GM12878 (cell line): ENCODE measurements at regions of chr20 and their contacts with region 1.

Region 1: DNA sequence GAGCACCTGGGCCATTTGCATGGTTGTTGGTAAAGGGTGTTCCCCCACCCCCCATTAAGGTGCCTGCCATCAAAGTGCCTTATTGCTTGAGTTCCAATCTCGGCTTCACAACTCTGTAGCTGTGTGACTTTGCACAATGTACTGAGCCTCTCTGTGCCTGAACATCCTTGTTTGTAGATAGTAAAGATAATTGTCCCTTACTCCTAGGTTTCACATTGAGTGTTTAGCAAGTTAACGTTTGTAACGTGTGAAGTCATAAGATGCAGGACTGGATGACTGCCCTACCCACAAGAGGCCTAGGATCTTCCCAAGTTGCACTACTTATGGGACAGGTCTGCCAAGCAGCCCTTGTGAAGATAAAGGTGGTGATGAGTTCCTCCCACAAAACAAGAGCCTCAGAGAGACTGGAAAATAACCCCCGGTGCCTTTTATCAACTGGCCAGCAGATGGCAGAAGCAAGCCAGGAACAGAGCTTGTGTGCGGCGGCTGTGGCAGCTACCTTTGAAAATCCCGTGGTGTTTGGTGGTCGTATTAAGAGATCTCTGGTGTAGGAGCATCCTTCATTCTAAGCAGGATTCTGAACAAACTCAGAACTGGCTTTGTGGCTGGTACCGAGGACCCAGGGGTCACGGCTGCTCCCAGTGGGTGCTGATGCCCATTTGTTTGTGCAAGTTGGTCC is 99.0 kb downstream of the CDH26 start:
- DNase-seq: peak; percentile 17
- ATAC-seq: peak; percentile 85
- H3K4me3 ChIP-seq: no peak overlapping the region
- H3K27ac ChIP-seq: no peak overlapping the region
- H3K4me1 ChIP-seq: no peaks in the 10 kb centered on the region
- H3K27me3 ChIP-seq: no peaks in the 10 kb centered on the region
- CTCF ChIP-seq: peak; percentile 82 to 92 (median 82)
- EP300 ChIP-seq: no peak
- POLR2A ChIP-seq: no peak
- RAD21 ChIP-seq: peak; percentile 86

Region 2: GRCh38 chr20:59940174-59940971 is 116.9 kb before region 1 on chr20 and contains the starts of genes FAM217B and PPP1R3D:
- CTCF ChIA-PET with region 1: interaction called, 3 read pairs
- POLR2A ChIA-PET with region 1: no interaction called
- RAD21 ChIA-PET with region 1: interaction called, 3 read pairs
- SMC1A ChIA-PET with region 1: no interaction called
- in situ Hi-C with region 1: no loop called
- intact Hi-C with region 1: loop called (anchors 10 kb)
- DNase-seq: peak; percentile 73
- ATAC-seq: peak; percentile 96
- H3K4me3 ChIP-seq: peak within 1 kb of the TSS; percentile 99
- H3K27ac ChIP-seq: peak within 1 kb of the TSS; percentile 93
- H3K4me1 ChIP-seq: peaks cover 10% of the 10 kb centered on the region
- H3K27me3 ChIP-seq: no peaks in the 10 kb centered on the region
- CTCF ChIP-seq: 0 out of 6 replicates have a peak, but pooled peaks of 1 of the 3 experiments have one; percentile 5
- EP300 ChIP-seq: peak in 1 of 2 experiments; percentile 31; a peak in 1 of 4 replicates
- POLR2A ChIP-seq: peak; percentile 89
- RAD21 ChIP-seq: no peak
- polyA plus RNA-seq, gene FAM217B: 6.3 to 6.8 TPM
- polyA plus RNA-seq, gene PPP1R3D: 0.74 to 1.3 TPM

Region 3: DNA sequence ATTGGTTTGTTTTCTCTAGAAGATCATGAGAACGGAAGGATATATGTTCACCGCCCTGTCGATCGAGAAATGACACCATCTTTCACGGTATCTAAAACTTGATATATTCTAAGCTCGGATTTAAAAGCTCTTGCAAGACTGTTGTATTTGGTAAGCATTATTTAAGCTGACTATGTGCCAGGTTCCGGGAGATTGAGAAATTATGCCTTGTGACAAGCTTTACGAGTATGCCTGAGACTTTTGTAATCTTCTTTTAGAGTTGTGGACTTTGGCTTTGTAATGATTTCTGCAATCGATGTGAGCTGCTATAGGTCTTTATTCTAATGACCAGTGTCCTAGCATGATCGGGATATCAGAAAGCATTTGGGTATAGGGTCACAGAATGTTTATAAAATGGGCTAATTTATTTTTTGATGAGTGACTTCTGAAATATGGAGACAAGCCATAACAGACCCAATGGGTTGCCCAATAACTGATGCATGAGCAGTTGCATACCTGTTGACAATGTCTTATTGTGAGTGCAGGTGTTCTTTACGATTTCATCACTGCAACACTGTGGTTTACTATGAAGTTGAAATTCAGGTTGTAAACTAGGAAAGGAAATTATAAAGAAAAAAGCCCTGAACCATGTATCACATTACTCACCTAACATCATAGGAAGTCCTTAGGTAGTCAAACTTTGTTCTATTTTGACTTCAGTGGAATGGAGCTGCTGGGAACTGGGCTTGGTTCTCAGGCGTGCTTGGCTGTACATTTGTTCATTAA is 85.0 kb before region 1 on chr20:
- CTCF ChIA-PET with region 1: no interaction called
- POLR2A ChIA-PET with region 1: no interaction called
- RAD21 ChIA-PET with region 1: no interaction called
- SMC1A ChIA-PET with region 1: no interaction called
- in situ Hi-C with region 1: no loop called
- intact Hi-C with region 1: no loop called
- DNase-seq: no peak
- ATAC-seq: no peak
- H3K4me3 ChIP-seq: no peak overlapping the region
- H3K27ac ChIP-seq: no peak overlapping the region
- H3K4me1 ChIP-seq: no peaks in the 10 kb centered on the region
- H3K27me3 ChIP-seq: no peaks in the 10 kb centered on the region
- CTCF ChIP-seq: no peak
- EP300 ChIP-seq: no peak
- POLR2A ChIP-seq: no peak
- RAD21 ChIP-seq: no peak

Region 4: GRCh38 chr20:60224914-60225313 is 167.7 kb after region 1 on chr20:
- CTCF ChIA-PET with region 1: no interaction called
- POLR2A ChIA-PET with region 1: no interaction called
- RAD21 ChIA-PET with region 1: no interaction called
- SMC1A ChIA-PET with region 1: no interaction called
- in situ Hi-C with region 1: no loop called
- intact Hi-C with region 1: no loop called
- DNase-seq: no peak
- ATAC-seq: no peak
- H3K4me3 ChIP-seq: no peak overlapping the region
- H3K27ac ChIP-seq: no peak overlapping the region
- H3K4me1 ChIP-seq: no peaks in the 10 kb centered on the region
- H3K27me3 ChIP-seq: no peaks in the 10 kb centered on the region
- CTCF ChIP-seq: peak in 2 of 3 experiments; percentile 13 to 21; a peak in 2 of 6 replicates
- EP300 ChIP-seq: no peak
- POLR2A ChIP-seq: no peak
- RAD21 ChIP-seq: no peak

Region 5: GRCh38 chr20:60262967-60263603 is 205.8 kb after region 1 on chr20:
- CTCF ChIA-PET with region 1: interaction called, 38 read pairs
- POLR2A ChIA-PET with region 1: no interaction called
- RAD21 ChIA-PET with region 1: interaction called, 4 read pairs
- SMC1A ChIA-PET with region 1: interaction called, 12 read pairs
- in situ Hi-C with region 1: no loop called
- intact Hi-C with region 1: loop called (anchors 5 kb)
- DNase-seq: no peak
- ATAC-seq: no peak
- H3K4me3 ChIP-seq: no peak overlapping the region
- H3K27ac ChIP-seq: no peak overlapping the region
- H3K4me1 ChIP-seq: no peaks in the 10 kb centered on the region
- H3K27me3 ChIP-seq: no peaks in the 10 kb centered on the region
- CTCF ChIP-seq: peak; percentile 50 to 69 (median 69); a peak in 5 of 6 replicates
- EP300 ChIP-seq: no peak
- POLR2A ChIP-seq: no peak
- RAD21 ChIP-seq: peak; percentile 47

Region 6: DNA sequence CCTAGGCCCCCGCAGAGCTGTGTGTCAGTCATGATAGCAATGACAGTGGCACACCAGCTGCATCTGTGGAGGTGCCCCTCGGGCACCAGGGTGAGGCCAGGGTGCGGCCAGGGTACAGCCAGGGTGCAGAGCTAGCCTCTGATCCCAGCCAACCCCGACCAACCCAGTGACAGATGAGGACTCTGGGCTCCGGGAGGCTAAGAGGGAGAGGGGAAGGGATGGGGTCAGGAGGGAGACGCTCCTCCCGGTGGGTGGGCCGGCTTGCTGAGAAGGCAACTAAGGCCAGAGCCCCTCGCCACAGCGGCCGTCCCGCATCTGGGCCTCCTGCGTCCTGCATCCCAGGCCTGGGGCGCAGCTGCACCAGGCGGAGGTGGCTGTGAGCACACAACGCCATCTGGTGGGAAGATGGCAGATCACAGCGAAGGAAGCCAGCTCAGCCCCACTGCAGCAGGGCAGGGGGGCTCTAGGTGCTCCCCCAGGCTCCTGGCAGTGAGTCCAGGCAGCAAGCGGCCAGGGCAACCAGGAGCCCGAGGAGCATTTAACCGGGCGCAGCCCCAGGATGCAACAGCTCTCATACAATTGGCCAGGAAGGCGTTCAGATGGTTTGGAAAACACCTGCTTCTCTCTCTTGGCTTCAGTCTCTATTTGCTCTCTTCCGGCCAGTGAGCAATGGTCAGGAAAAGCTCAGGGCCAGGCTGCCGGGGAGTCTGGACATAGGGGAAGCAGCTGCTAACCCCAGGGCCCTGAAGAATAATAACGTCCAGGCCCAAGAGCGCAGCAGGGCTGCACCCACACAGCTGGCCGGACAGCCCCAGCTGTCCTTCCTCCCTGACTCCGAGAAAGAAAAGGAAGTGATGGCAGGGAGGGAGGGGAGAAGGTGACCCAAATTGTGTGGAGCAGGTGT is 1839.0 kb after region 1 on chr20:
- CTCF ChIA-PET with region 1: interaction called, 3 read pairs
- POLR2A ChIA-PET with region 1: no interaction called
- RAD21 ChIA-PET with region 1: no interaction called
- SMC1A ChIA-PET with region 1: no interaction called
- in situ Hi-C with region 1: loop called (anchors 5 kb)
- intact Hi-C with region 1: loop called (anchors 5 kb)
- DNase-seq: no peak
- ATAC-seq: peak; percentile 99
- H3K4me3 ChIP-seq: no peak overlapping the region
- H3K27ac ChIP-seq: no peak overlapping the region
- H3K4me1 ChIP-seq: no peaks in the 10 kb centered on the region
- H3K27me3 ChIP-seq: no peaks in the 10 kb centered on the region
- CTCF ChIP-seq: peak; percentile 69 to 86 (median 85)
- EP300 ChIP-seq: no peak
- POLR2A ChIP-seq: no peak
- RAD21 ChIP-seq: peak; percentile 75